ENCODE measurements at regions of chr12 and their contacts with region 1.

Region 1: DNA sequence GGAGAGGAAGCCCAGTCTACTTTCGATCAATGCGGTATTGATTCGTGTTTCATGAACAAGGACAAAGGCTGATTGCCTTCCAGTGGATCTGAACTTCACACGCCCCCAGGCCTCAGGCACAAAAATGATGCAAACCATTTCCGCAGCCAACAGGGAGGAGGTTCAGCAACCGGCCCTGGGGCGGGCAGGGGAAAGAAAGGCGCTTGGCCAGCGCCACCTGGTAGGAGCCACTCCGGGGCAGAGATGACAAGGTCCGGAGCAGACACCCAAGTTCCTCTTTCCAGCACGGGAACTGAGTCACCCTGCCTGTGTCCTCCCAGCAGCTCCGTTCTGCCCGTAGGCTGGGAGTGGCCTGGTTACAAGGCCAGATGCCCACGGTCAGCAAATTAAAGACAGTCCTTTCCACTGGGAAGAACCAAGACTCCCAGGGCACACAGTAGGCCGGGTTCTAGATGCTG is 136.4 kb downstream of the SCARB1 start:
- H3K4me3 Mint-ChIP-seq: no peak overlapping the region
- H3K27ac Mint-ChIP-seq: peak overlapping the region; percentile 90
- H3K4me1 Mint-ChIP-seq: peaks cover 39% of the 10 kb centered on the region
- H3K27me3 Mint-ChIP-seq: no peaks in the 10 kb centered on the region

Region 2: GRCh38 chr12:124680863-124681778 is 46.2 kb before region 1 on chr12:
- intact Hi-C with region 1: loop called (anchors 5 kb)
- H3K4me3 Mint-ChIP-seq: peak overlapping the region; percentile 20
- H3K27ac Mint-ChIP-seq: peak overlapping the region; percentile 82
- H3K4me1 Mint-ChIP-seq: peaks cover 81% of the 10 kb centered on the region
- H3K27me3 Mint-ChIP-seq: peaks cover 10% of the 10 kb centered on the region